GM18951 (cell line): ENCODE measurements at regions of chr2 and their contacts with region 1.

Region 1: GRCh38 chr2:84495539-84496146 is 20.7 kb upstream of the DNAH6 start:
- POLR2A ChIP-seq: no peak

Region 2: DNA sequence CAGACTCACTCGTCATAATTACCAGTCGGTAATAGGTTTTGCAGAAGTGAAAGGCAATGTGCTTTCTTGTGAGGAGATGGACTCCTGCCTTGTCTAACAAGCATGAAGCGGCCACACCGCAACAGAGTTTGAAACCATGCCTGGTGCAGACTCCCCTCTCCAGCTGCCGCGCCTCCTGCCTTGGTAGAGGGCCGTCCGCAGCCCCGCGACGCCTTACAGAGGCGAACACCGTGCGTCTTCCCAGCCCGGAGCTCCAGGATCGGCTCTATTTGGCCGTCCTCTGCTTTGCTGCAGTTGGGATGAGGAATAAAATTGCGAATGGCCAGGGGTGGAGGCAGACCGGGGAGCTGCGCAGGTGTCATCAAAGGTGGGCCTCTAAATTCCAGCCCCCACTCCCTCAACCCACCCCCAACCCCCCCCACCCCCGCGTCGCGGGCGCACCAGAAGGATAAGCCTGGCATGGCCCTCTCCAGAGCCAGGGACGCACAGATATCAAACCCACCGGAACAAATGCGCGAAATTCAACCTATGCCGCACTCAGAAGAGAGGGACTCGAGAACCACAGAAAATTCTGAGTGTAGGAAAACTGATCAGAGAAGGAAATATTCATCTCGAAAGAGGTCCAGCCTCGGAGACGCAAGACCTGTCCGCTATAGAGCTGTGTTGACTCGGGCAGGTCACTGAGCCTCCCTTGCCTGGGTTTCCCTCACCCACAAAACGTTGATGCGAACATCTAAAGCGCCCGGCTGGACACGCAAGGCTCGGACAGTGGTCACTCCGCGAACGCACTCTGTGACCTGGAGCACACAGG is 384.1 kb after region 1 on chr2:
- in situ Hi-C with region 1: loop called (anchors 10 kb)
- POLR2A ChIP-seq: no peak

Region 3: DNA sequence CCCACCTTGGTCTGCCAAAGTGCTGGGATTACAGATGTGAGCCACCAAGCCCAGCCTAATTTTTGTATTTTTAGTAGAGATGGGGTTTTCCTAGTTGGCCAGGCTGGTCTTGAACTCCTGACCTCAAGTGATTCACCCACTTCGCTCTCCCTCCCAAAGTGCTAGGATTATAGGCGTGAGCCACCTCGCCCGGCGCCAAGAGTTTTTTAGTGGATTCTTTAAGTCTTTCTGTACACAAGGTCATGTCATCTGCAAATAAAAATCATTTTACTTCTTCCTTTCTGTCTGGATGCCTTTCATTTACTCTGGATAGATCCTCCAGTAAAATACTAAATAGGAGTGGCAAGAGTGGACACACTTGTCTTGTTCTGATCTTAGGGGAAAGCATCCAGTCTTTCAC is 537.0 kb after region 1 on chr2:
- in situ Hi-C with region 1: loop called (anchors 25 kb)
- POLR2A ChIP-seq: no peak